Sigmoid colon (tissue), 7 donors: ENCODE measurements at regions of chr5 and their contacts with region 1.

Region 1: GRCh38 chr5:178204182-178204894 is at the start of gene HNRNPAB:
- DNase-seq: peak; percentile 98
- H3K4me3 ChIP-seq: peak within 1 kb of the TSS; percentile 71 to 99 (median 86)
- H3K27ac ChIP-seq: peak within 1 kb of the TSS; percentile 93 to 97 (median 96)
- H3K4me1 ChIP-seq: peaks cover 0 to 28% (median 22%) of the 10 kb centered on the region in 4 donors
- H3K27me3 ChIP-seq: no peaks in the 10 kb centered on the region
- CTCF ChIP-seq: no peak
- EP300 ChIP-seq: no peak
- POLR2A ChIP-seq: peak; percentile 96 to 98
- total RNA-seq, gene HNRNPAB: 77.8 to 101 (median 83.0) TPM

Region 2: DNA sequence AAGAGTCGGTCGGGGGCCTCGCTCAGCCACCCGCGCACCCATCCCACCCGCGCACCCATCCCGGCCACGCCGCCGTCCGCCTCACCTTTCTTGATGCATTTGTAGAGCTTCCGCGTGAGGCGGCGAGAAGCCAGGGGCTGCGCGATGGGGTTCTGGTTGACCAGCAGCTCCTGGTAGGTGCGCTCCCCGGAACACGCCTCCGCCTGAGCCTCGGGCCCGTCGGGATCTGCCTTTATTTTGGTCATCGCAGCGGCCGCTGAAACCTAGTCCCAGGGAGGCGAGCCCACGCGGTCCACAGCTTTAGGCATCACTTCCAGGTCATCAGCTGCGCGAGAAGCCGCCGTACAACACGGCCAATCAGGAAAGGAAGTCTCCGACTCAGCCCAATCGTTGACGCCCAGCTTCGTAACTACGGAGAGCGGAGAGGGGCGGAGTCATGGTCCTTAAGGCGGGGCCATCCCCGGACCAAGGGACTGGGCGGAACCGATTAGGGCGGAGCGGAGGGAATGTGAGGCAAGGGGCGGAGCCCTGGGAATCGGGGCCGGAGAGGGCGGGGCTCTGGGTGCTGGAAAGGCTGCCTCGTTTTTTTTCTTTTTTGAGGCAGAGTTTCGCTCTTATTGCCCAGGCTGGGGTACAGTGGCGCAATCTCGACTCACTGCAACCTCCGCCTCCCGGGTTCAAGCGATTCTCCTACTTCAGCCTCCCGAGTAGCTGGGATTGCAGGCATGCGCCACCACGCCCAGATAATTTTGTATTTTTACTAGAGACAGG is 50.6 kb before region 1 on chr5 and contains the start of gene NHP2:
- intact Hi-C with region 1: loop called (anchors 5 kb)
- DNase-seq: peak; percentile 99
- H3K4me3 ChIP-seq: peak within 1 kb of the TSS; percentile 56 to 88 (median 72)
- H3K27ac ChIP-seq: peak within 1 kb of the TSS; percentile 70 to 82 (median 80)
- H3K4me1 ChIP-seq: peaks cover 0 to 28% (median 18%) of the 10 kb centered on the region in 4 donors
- H3K27me3 ChIP-seq: no peaks in the 10 kb centered on the region
- CTCF ChIP-seq: no peak
- EP300 ChIP-seq: peak in 1 of 4 donors; percentile 81
- POLR2A ChIP-seq: peak in 1 of 2 donors; percentile 16
- total RNA-seq, gene NHP2: 77.8 to 231 (median 185) TPM

Region 3: DNA sequence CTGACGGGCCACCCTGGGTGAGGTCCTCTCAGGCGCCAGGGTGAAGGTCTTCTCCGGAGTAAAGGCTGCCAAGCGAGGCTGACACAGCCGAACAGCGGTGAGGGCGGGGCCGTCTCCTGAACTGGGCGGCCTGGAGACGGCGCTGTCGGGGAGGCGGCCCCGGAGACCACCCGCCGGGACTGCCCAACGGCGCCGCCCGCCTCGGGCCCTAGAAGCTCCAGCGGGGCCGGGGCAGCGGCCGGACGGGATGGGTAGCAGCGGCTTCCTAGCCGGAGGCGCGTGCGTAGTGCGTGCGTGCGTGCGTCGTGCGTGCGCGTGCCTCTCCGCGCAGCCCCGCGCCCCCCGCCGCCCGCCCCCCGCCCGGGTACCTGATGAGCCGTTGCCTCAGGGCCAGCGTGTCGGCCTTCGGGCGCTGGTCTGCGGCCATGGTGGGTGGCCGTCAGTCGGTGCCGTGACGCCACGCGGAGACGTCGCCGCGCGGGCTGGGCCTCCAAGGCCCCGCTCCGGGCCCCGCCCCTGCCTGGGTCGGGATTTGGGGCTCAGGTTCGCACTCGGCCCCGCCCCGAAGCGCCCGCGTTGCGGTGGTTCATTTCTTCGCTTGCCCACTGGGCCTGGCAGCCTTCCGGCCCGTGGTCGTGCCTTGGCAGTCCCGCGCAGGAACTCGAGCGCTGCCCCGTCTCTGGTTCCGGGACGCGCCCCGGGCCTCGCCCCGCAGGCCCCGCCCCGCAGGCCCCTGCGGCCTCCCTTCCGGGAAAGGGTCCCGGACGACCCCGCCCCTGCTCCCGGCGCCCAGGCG is 28.0 kb after region 1 on chr5 and contains the start of gene PHYKPL:
- intact Hi-C with region 1: loop called (anchors 2 kb)
- DNase-seq: peak; percentile 86
- H3K4me3 ChIP-seq: peak within 1 kb of the TSS; percentile 65 to 92 (median 80)
- H3K27ac ChIP-seq: peak within 1 kb of the TSS; percentile 87 to 97 (median 96)
- H3K4me1 ChIP-seq: peaks cover 0 to 29% (median 27%) of the 10 kb centered on the region in 4 donors
- H3K27me3 ChIP-seq: no peaks in the 10 kb centered on the region
- CTCF ChIP-seq: no peak
- EP300 ChIP-seq: no peak
- POLR2A ChIP-seq: no peak
- total RNA-seq, gene PHYKPL: 26.0 to 66.5 (median 41.6) TPM

Region 4: DNA sequence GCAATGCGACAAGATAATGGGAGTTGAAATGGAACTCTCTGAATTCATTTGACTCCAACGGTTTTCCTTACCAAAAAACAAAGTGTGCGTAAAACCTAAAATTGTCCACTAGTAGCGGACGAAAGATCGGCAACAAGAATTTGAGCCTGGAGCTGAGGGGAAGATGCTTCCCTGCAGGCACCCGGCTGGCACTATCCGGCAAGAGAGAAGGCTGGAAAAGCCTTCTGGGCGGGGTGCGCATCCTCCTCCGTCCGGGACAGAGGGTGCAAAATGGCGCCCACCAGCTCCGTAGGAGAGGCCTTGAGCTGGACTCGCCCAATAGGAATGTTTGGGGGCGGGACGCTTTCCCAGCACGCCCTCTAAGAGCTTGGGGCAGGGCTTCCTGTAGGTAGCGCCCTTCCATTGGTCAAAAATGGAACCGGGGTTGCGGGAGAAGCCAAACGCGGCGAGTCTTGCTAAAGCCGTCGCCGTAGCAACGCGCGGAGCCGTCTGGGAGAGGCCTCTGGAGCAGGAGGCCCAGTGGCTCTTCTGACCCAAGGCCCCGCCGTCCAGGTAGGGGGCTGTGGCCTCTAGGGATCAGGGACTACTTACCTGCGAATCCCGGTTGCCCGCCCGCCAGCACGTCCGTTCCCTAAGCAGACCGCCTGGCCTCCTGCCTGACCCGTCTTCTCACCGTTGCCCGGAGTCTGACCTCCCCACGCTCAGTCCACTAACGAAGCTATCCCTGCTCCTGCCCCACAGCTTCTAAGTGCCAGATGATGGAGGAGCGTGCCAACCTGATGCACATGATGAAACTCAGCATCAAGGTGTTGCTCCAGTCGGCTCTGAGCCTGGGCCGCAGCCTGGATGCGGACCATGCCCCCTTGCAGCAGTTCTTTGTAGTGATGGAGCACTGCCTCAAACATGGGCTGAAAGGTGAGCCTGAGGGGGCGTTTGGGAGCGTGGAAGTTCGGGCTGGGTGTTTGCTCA is 1355.2 kb after region 1 on chr5:
- intact Hi-C with region 1: loop called (anchors 10 kb)
- DNase-seq: peak; percentile 99
- H3K4me3 ChIP-seq: peak overlapping the region; percentile 46 to 56 (median 54)
- H3K27ac ChIP-seq: peak overlapping the region; percentile 85 to 93 (median 89)
- H3K4me1 ChIP-seq: peaks cover 0 to 16% (median 15%) of the 10 kb centered on the region in 4 donors
- H3K27me3 ChIP-seq: no peaks in the 10 kb centered on the region
- CTCF ChIP-seq: no peak
- EP300 ChIP-seq: no peak
- POLR2A ChIP-seq: peak; percentile 89 to 94